ENCODE measurements at regions of chr1 and their contacts with region 1.

Region 1: GRCh38 chr1:186738926-186739325 is 58.7 kb upstream of the PTGS2 start:
- DNase-seq: peak; percentile 69
- H3K4me3 Mint-ChIP-seq: peak overlapping the region; percentile 46
- H3K27ac Mint-ChIP-seq: peak overlapping the region; percentile 35
- H3K4me1 Mint-ChIP-seq: peaks cover 27% of the 10 kb centered on the region
- H3K27me3 Mint-ChIP-seq: no peaks in the 10 kb centered on the region

Region 2: GRCh38 chr1:185636848-185637247 is 1102.1 kb before region 1 on chr1:
- intact Hi-C with region 1: loop called (anchors 5 kb)
- DNase-seq: peak; percentile 84
- H3K4me3 Mint-ChIP-seq: peak overlapping the region; percentile 18
- H3K27ac Mint-ChIP-seq: peak overlapping the region; percentile 92
- H3K4me1 Mint-ChIP-seq: peaks cover 20% of the 10 kb centered on the region
- H3K27me3 Mint-ChIP-seq: no peaks in the 10 kb centered on the region

Region 3: DNA sequence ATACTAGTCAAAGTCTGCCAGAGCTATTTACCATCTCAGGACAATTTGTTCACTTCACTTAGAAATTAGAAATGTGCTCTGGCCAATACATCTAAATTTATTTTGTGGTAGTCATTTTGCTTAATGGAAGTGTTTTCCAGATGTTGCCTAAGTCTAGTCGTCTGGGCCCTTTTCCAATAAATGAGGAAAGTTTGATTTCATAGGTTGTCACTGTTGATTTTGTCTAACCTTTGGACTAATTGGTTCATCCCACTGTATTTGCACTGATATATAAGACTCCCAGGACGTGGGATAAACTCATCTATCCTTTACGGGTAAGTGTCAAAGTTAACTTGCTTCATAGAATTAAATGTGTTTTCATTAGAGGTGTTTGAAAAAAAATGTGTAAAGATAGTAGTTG is 442.9 kb before region 1 on chr1:
- intact Hi-C with region 1: loop called (anchors 10 kb)
- DNase-seq: no peak
- H3K4me3 Mint-ChIP-seq: peak within 1 kb of the TSS; percentile 56
- H3K27ac Mint-ChIP-seq: peak within 1 kb of the TSS; percentile 45
- H3K4me1 Mint-ChIP-seq: peaks cover 44% of the 10 kb centered on the region
- H3K27me3 Mint-ChIP-seq: no peaks in the 10 kb centered on the region

Region 4: DNA sequence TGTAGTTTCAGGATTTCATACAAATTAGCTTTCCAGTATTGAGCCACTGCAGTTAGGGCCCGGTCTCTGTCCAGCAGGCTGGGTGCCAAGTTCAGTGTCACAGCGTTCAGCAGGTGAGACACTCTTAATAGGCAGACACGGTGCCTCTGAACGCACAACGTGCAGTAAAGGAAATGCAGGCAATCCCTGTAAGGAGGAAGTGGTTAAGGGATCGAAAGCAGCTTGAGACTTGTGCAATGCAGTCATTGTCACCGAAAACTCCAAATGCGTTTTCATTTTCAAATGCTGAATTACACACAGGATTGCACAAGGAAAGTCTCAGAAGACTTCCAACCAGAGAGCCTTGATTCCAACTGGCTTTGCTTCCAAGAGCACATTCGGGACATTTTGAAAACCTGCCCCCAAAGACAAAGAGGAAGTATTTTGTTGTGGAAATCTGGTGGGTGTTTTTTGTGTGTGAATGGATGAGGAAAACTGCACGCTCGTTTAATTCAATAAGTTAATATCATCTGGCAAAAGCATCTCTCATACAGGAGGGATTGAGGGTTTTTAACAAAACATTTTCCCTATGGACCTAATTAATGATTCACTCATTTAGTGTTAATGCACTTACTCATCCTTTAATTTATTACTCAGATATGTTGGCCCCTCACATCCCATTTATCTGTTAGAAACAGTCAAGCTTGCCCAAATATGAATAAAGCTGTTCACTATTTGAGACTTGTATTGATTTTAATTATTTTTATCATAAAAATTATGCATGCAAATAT is 120.3 kb before region 1 on chr1:
- intact Hi-C with region 1: loop called (anchors 2 kb)
- DNase-seq: peak; percentile 88
- H3K4me3 Mint-ChIP-seq: peak overlapping the region; percentile 77
- H3K27ac Mint-ChIP-seq: no peak overlapping the region
- H3K4me1 Mint-ChIP-seq: peaks cover 37% of the 10 kb centered on the region
- H3K27me3 Mint-ChIP-seq: peaks cover 18% of the 10 kb centered on the region

Region 5: DNA sequence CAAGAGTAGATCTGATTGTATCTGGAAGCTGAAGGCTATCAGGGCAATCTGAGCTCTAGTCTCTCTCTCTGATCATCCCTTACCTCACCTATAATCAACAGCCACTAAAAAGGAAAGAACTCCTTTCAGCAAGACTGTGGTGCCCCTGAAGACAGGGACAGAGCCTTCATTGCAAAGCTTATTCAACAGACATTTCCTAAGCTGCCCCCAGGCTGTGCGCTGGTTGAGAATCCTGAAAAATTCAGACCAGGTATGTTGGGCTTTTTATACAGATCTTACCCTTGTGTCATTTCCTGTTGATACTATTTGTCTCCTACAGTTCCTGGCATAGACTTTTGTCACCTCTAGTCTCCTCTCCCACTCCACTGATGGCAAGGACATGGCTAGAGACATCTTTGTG is 26.5 kb after region 1 on chr1:
- intact Hi-C with region 1: loop called (anchors 2 kb)
- DNase-seq: no peak
- H3K4me3 Mint-ChIP-seq: no peak overlapping the region
- H3K27ac Mint-ChIP-seq: no peak overlapping the region
- H3K4me1 Mint-ChIP-seq: peaks cover 4% of the 10 kb centered on the region
- H3K27me3 Mint-ChIP-seq: peaks cover 5% of the 10 kb centered on the region

Region 6: GRCh38 chr1:186974774-186975181 is 235.9 kb after region 1 on chr1:
- intact Hi-C with region 1: no loop called
- DNase-seq: no peak
- H3K4me3 Mint-ChIP-seq: no peak overlapping the region
- H3K27ac Mint-ChIP-seq: no peak overlapping the region
- H3K4me1 Mint-ChIP-seq: no peaks in the 10 kb centered on the region
- H3K27me3 Mint-ChIP-seq: peaks cover 4% of the 10 kb centered on the region